ENCODE measurements at regions of chr4 and their contacts with region 1.

Region 1: GRCh38 chr4:140153718-140154571 is at the start of gene MAML3:
- DNase-seq: peak; percentile 82 to 97 (median 92)

Region 2: GRCh38 chr4:140012688-140013486 is 141.1 kb before region 1 on chr4:
- intact Hi-C with region 1: loop called (anchors 10 kb)
- DNase-seq: peak in 41 of 42 donors; percentile 31 to 88 (median 70)

Region 3: GRCh38 chr4:140095694-140096482 is 58.1 kb before region 1 on chr4:
- intact Hi-C with region 1: loop called (anchors 2 kb)
- DNase-seq: peak in 19 of 42 donors; percentile 8 to 61 (median 34)

Region 4: DNA sequence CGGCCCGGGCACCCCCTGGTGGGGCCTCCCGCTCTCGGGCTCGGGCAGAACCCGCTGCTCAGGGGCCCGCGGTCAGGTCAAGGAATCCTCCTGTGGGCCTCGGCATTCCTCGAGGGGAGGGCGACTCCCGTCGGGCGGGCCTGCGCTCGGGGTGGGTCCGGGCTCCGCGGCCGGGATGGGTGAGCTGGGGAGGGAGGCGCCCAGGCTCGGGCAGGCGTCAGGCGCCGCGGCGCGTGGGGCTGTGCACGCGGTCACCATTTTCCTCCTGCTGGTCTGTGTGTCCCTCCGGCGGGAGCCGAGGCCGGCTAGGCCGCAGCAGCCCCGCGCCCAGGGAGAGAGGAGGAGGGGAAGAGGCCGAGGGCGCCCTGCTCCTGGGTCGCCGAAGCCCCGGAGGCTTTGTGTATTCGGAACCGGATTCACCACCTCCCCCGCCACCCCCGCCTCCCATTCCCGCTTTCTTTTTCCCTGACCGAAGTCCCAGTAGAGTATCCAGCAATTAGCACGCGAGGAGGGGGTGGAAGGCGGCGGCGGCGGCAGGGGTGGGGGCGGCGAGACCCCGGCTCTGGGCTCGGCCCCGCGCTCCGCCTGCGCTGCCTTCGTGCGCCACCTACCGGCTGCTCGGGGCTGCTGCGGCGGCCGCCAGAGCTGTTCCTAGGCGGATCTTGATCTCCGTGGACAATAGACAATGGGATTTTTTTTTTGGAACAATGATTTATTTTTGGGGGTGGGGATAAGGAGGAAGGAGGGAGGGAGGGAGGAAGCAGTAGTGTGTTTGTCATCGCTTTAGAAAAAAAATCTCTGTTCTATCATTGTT is 99.0 kb after region 1 on chr4:
- intact Hi-C with region 1: loop called (anchors 2 kb)
- DNase-seq: peak; percentile 62 to 94 (median 86)

Measured in head of caudate nucleus (tissue), 42 donors.